Activated CD8-positive, alpha-beta T cell treated with anti-CD3 and anti-CD28 coated beads for 36 hours (primary cell): ENCODE measurements at regions of chr4 and their contacts with region 1.

Region 1: GRCh38 chr4:155787113-155787710 is 28.4 kb downstream of the GUCY1B1 start:
- DNase-seq: peak; percentile 10
- ATAC-seq: peak; percentile 87
- H3K4me3 Mint-ChIP-seq: no peak overlapping the region
- H3K27ac Mint-ChIP-seq: no peak overlapping the region
- H3K4me1 Mint-ChIP-seq: no peaks in the 10 kb centered on the region
- H3K27me3 Mint-ChIP-seq: peaks cover 4% of the 10 kb centered on the region
- CTCF ChIP-seq: peak; percentile 57

Region 2: DNA sequence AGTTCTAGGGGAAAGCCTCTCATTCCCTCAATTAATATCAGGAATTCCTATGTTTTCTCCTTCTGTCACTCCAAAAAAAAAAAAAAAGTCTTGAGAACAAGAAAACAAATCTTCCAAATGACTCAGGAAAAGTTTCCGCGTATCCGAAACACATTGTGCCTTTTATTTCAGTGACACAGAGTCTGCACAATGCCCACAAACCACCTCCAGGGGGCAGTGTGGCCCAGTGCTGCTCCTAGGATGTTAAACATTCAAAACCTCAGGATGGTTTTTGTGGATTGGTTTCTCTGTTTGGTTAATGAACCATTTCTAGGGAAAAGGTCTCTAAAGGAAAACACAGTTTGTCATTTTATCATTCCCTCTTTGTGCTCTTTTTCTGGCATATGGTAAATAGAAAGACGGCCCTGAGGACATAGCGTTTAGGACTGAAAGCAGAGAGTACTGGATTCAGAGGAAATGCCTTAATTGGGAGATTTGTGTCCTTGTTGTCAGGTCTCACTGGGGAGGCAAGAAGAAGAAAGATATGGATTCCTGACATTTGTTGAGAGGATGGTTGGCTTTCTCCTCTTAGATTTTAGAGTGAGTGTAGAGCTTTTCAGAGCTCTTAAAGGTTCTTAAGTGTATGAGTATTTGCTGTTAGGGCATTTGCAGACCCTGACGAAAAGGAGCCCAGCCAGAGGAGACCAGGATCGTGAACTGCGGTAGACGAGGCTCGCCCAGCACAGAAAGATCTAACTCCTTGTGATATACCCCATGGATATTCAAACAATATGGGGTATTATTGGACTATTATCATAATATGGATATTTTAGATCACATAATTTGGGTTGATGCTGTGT is 344.7 kb before region 1 on chr4:
- CTCF ChIA-PET with region 1: interaction called, 7 read pairs
- POLR2A ChIA-PET with region 1: no interaction called
- intact Hi-C with region 1: loop called (anchors 1 kb)
- DNase-seq: peak; percentile 72
- ATAC-seq: peak; percentile 68
- H3K4me3 Mint-ChIP-seq: no peak overlapping the region
- H3K27ac Mint-ChIP-seq: no peak overlapping the region
- H3K4me1 Mint-ChIP-seq: no peaks in the 10 kb centered on the region
- H3K27me3 Mint-ChIP-seq: peaks cover 16% of the 10 kb centered on the region
- CTCF ChIP-seq: peak; percentile 78

Region 3: DNA sequence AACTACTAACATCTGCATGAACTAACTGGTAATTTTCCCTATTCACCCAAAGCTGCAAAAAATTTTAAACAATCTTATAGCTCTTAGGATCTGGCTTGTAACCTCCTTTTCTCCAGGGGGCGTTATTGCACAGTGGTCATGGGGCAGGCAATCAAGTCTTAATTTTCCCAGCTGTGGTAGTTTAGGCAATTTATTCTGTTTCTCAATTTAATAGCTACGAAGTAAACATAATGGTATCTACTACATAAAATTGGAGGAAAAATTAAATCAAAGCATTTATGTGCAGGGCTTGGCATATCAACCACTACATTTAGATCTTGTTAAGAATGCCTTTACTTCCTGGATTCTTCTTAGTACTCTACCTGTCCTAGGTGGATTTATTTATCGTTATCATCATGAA is 257.9 kb before region 1 on chr4:
- CTCF ChIA-PET with region 1: interaction called, 5 read pairs
- POLR2A ChIA-PET with region 1: no interaction called
- intact Hi-C with region 1: loop called (anchors 2 kb)
- DNase-seq: peak; percentile 38
- ATAC-seq: no peak
- H3K4me3 Mint-ChIP-seq: no peak overlapping the region
- H3K27ac Mint-ChIP-seq: no peak overlapping the region
- H3K4me1 Mint-ChIP-seq: no peaks in the 10 kb centered on the region
- H3K27me3 Mint-ChIP-seq: peaks cover 2% of the 10 kb centered on the region
- CTCF ChIP-seq: no peak

Region 4: DNA sequence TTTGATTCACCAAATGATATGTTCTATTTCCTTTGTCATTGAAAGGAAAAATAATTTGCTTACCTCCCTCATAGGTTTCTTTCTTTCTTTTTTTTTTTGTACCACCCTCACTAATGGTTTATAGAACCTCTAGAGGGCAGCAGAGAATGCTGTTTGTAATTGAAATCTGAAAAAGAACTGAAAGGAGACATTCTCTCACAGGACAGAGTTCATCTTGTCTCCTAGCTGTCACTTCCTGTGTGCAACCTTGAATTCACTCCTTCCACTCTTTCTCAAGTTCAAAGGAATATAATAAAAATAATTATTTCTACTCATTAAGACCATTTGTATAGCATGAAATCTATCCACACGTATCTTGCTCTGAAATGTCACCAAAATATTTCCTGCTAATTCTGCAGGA is 22.6 kb after region 1 on chr4:
- CTCF ChIA-PET with region 1: no interaction called
- POLR2A ChIA-PET with region 1: no interaction called
- intact Hi-C with region 1: no loop called
- DNase-seq: peak; percentile 52
- ATAC-seq: peak; percentile 96
- H3K4me3 Mint-ChIP-seq: no peak overlapping the region
- H3K27ac Mint-ChIP-seq: no peak overlapping the region
- H3K4me1 Mint-ChIP-seq: peaks cover 2% of the 10 kb centered on the region
- H3K27me3 Mint-ChIP-seq: no peaks in the 10 kb centered on the region
- CTCF ChIP-seq: peak; percentile 68